IMR-90 (cell line): ENCODE measurements at regions of chr11 and their contacts with region 1.

Region 1: GRCh38 chr11:115360186-115360824 is 143.9 kb downstream of the CADM1 start:
- DNase-seq: peak; percentile 50
- ATAC-seq: peak; percentile 76
- H3K4me3 ChIP-seq: no peak overlapping the region
- H3K27ac ChIP-seq: no peak overlapping the region
- H3K4me1 ChIP-seq: peaks cover 5% of the 10 kb centered on the region
- H3K27me3 ChIP-seq: no peaks in the 10 kb centered on the region
- CTCF ChIP-seq: 0 out of 2 replicates have a peak, but pooled peaks have one; percentile 19
- POLR2A ChIP-seq: no peak
- RAD21 ChIP-seq: 0 out of 2 replicates have a peak, but pooled peaks have one; percentile 3

Region 2: DNA sequence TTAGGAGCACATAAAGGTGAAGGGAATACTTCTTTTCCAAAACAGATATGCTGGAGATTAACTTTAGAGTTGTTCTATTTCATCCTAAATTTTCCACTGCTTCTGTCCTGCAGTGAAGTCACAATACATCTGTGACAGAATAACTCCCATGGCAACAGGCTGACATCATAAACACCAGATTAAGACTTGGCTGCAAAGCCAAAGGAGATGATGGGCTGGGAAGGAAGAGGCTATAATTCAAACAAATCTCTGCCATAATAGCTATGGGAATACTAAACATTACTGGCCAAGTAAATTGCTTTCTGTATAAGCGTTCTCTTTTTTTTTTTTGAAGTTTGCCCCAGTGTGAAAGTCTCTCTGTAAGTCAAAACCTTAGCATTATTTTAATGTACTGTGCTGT is 36.2 kb after region 1 on chr11:
- CTCF ChIA-PET with region 1: no interaction called
- POLR2A ChIA-PET with region 1: no interaction called
- dilution Hi-C with region 1: no loop called
- in situ Hi-C with region 1: no loop called
- intact Hi-C with region 1: loop called (anchors 5 kb)
- DNase-seq: no peak
- ATAC-seq: no peak
- H3K4me3 ChIP-seq: no peak overlapping the region
- H3K27ac ChIP-seq: no peak overlapping the region
- H3K4me1 ChIP-seq: no peaks in the 10 kb centered on the region; the same call in 1 of the 2 replicates
- H3K27me3 ChIP-seq: no peaks in the 10 kb centered on the region
- CTCF ChIP-seq: no peak
- POLR2A ChIP-seq: no peak
- RAD21 ChIP-seq: no peak

Region 3: DNA sequence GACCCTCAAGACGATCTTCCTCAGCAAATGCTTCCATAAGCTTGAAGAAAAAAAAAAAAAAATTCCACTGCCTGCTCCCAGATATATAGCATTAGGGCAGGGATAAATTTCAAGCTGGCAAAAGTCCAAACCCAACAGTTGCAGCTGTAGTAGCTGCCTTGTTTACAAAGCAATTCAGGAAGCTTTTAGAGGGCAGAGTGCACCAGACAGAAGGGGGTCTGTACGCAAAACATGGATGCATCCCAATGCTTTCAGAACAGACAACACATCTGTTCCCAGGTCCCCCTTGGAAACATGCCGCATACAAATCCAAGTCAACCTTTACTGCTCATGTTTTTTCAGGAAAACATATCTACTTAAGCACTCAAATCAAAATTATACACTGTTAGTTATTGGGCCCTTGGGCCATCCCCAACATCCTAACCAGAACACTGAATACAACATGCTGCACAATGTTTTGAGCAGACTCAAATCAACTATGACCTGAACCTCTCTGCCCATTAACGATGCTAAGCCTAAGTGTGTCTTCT is 49.5 kb after region 1 on chr11:
- CTCF ChIA-PET with region 1: no interaction called
- POLR2A ChIA-PET with region 1: no interaction called
- dilution Hi-C with region 1: no loop called
- in situ Hi-C with region 1: loop called (anchors 10 kb)
- intact Hi-C with region 1: no loop called
- DNase-seq: peak; percentile 48
- ATAC-seq: peak; percentile 39
- H3K4me3 ChIP-seq: no peak overlapping the region
- H3K27ac ChIP-seq: no peak overlapping the region
- H3K4me1 ChIP-seq: peaks cover 3% of the 10 kb centered on the region
- H3K27me3 ChIP-seq: no peaks in the 10 kb centered on the region
- CTCF ChIP-seq: no peak
- POLR2A ChIP-seq: no peak
- RAD21 ChIP-seq: no peak